Mammary epithelial cell (primary cell): ENCODE measurements at regions of chr4 and their contacts with region 1.

Region 1: DNA sequence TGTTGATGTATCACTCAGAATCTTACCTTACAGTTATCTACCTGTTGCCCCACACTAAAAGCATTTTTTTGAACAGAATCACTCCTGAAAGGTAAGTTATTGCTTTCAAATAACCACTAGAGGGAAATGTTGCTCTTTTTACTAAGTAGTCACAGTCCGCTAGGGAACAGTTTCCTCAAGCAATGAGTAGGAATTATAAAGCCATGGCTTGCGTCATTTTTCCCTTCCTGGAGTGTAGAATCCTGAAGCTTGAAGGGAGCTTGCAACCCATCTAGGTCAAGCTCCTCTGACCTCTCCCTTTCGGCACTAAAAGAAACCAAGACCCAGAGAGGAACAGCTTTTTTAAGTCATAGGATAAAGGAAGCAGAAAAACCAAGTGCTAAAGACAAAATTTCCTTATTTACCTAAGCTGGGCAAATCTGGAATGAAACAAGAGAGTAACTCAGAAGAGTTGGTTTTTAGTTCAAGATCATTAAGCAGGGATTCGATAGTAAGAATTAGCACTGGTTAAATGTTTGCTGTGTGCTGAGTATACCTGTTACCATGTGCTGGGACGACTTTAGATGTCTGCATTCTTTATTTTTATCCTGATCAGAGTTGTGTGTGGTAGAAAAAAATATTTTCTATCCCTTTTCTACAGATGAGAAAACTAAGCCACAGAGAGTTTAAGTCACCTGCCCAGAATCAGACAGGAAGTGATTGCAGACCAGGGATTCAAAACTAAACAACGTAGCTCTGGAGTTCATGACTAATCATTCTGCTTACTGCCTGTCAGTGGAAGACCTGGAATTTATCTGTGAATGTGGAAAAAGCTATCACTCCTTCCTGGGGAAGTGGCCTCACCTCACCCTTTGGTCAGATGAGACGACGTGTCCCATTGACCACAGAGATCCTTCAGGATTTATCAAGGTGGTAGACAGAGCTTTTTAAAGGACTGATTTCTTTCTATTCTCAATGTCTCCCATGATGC is 631.5 kb downstream of the RAB28 start:
- DNase-seq: peak; percentile 59
- H3K4me3 ChIP-seq: no peak overlapping the region
- H3K27ac ChIP-seq: no peak overlapping the region
- H3K4me1 ChIP-seq: no peaks in the 10 kb centered on the region
- H3K27me3 ChIP-seq: no peaks in the 10 kb centered on the region
- CTCF ChIP-seq: peak; percentile 37 to 60

Region 2: GRCh38 chr4:12612876-12613275 is 239.7 kb before region 1 on chr4:
- CTCF ChIA-PET with region 1: no interaction called
- dilution Hi-C with region 1: no loop called
- in situ Hi-C with region 1: no loop called
- intact Hi-C with region 1: no loop called
- DNase-seq: no peak
- H3K4me3 ChIP-seq: no peak overlapping the region
- H3K27ac ChIP-seq: no peak overlapping the region
- H3K4me1 ChIP-seq: no peaks in the 10 kb centered on the region
- H3K27me3 ChIP-seq: no peaks in the 10 kb centered on the region
- CTCF ChIP-seq: no peak

Region 3: GRCh38 chr4:13430834-13431568 is 578.4 kb after region 1 on chr4:
- CTCF ChIA-PET with region 1: no interaction called
- dilution Hi-C with region 1: no loop called
- in situ Hi-C with region 1: no loop called
- intact Hi-C with region 1: loop called (anchors 5 kb)
- DNase-seq: no peak
- H3K4me3 ChIP-seq: no peak overlapping the region
- H3K27ac ChIP-seq: no peak overlapping the region
- H3K4me1 ChIP-seq: no peaks in the 10 kb centered on the region
- H3K27me3 ChIP-seq: no peaks in the 10 kb centered on the region
- CTCF ChIP-seq: peak; percentile 36 to 51

Region 4: GRCh38 chr4:13548984-13549546 is 696.4 kb after region 1 on chr4:
- CTCF ChIA-PET with region 1: no interaction called
- dilution Hi-C with region 1: loop called (anchors 25 kb)
- in situ Hi-C with region 1: loop called (anchors 5 kb)
- intact Hi-C with region 1: loop called (anchors 1 kb)
- DNase-seq: peak; percentile 70
- H3K4me3 ChIP-seq: peak overlapping the region; percentile 49 to 53 (median 49)
- H3K27ac ChIP-seq: no peak overlapping the region
- H3K4me1 ChIP-seq: peaks cover 16% of the 10 kb centered on the region
- H3K27me3 ChIP-seq: peaks cover 12% of the 10 kb centered on the region
- CTCF ChIP-seq: peak; percentile 77 to 93